PC-9 (cell line): ENCODE measurements at regions of chr19 and their contacts with region 1.

Region 1: DNA sequence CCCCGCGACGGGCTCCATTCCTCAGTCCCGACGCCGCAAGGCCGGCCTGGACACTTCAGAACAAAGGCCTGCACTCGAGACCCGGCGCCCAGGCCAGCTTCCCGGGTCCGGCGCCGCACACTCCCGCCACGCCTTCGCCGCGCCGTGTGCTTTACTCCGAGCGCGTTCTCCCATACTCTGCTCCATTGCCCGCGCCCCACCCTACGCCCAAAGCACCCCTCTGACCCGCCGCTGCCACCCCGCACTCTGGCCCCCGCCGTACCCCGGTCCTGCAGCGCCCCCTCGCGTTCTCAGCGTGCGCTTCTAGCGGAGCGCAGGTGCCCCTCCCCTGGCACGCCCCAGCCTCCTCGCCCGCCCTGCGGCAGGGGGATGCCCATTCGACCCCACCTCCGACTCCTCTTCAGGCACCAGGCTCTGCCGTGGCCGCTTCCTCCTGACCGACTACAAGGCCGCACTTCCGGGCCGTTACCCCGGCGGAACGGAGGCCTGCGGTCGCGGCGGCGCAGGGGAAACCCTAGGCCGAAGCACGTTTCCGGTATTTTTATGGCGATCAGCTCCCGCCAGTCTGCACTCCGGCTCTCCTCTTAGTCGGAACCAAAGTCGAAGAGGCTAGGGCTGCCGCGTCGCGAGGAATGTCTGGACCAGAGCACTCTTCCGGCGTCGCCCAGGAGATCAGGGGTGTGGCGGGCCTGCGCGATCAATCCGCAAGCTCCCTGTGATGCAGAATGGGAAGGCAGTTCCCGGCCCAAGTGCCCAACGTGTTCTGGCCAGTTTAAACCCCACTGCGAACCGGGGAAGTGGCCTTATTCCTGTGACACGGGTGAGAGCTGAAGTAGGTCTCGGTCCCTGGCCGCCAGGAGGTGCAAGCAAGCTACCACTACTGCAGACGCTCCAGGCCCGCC is at the start of gene ZBTB45:
- DNase-seq: peak; percentile 83 to 92
- H3K4me3 ChIP-seq: peak within 1 kb of the TSS; percentile 83
- H3K27ac ChIP-seq: peak within 1 kb of the TSS; percentile 68
- H3K4me1 ChIP-seq: peaks cover 10% of the 10 kb centered on the region
- H3K27me3 ChIP-seq: no peaks in the 10 kb centered on the region
- CTCF ChIP-seq: peak; percentile 67
- total RNA-seq, gene ZBTB45: 8.1 and 8.9 TPM in 2 replicates

Region 2: GRCh38 chr19:57103573-57104277 is 1415.9 kb before region 1 on chr19:
- CTCF ChIA-PET with region 1: interaction called, 4 read pairs
- POLR2A ChIA-PET with region 1: no interaction called
- intact Hi-C with region 1: loop called (anchors 5 kb)
- DNase-seq: peak; percentile 35 to 49
- H3K4me3 ChIP-seq: peak overlapping the region; percentile 3; the same call in 1 of the 2 replicates
- H3K27ac ChIP-seq: no peak overlapping the region
- H3K4me1 ChIP-seq: no peaks in the 10 kb centered on the region
- H3K27me3 ChIP-seq: no peaks in the 10 kb centered on the region
- CTCF ChIP-seq: peak; percentile 91

Region 3: GRCh38 chr19:58204588-58204987 is 315.0 kb before region 1 on chr19:
- CTCF ChIA-PET with region 1: no interaction called
- POLR2A ChIA-PET with region 1: no interaction called
- intact Hi-C with region 1: no loop called
- DNase-seq: no peak
- H3K4me3 ChIP-seq: no peak overlapping the region
- H3K27ac ChIP-seq: no peak overlapping the region
- H3K4me1 ChIP-seq: no peaks in the 10 kb centered on the region
- H3K27me3 ChIP-seq: no peaks in the 10 kb centered on the region
- CTCF ChIP-seq: no peak

Region 4: DNA sequence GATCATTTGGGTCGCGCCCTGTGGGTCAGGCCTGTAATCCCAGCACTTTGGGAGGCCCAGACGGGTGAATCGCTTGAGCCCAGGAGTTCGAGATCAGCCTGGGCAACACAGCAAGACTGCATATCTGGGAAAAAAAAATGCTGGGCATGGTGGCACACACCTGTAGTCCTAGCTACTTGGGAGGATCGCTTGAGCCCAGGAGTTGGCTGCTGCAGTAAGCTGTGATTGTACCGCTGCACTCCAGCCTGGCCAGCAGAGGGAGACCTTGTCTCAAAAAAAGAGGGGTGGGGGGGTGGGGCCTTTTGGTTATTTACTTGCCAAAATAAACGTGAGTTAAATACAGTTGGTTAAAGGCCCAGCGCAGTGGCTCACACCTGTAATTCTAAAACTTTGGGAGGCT is 300.7 kb before region 1 on chr19:
- CTCF ChIA-PET with region 1: interaction called, 6 read pairs
- POLR2A ChIA-PET with region 1: interaction called, 9 read pairs
- intact Hi-C with region 1: loop called (anchors 2 kb)
- DNase-seq: peak in 1 of 2 experiments; percentile 29
- H3K4me3 ChIP-seq: no peak overlapping the region
- H3K27ac ChIP-seq: no peak overlapping the region
- H3K4me1 ChIP-seq: no peaks in the 10 kb centered on the region
- H3K27me3 ChIP-seq: no peaks in the 10 kb centered on the region
- CTCF ChIP-seq: peak; percentile 59

Region 5: GRCh38 chr19:58228585-58229254 is 290.9 kb before region 1 on chr19 and contains the start of gene ZNF544:
- CTCF ChIA-PET with region 1: no interaction called
- POLR2A ChIA-PET with region 1: no interaction called
- intact Hi-C with region 1: loop called (anchors 1 kb)
- DNase-seq: peak; percentile 57 to 71
- H3K4me3 ChIP-seq: peak within 1 kb of the TSS; percentile 75
- H3K27ac ChIP-seq: peak within 1 kb of the TSS; percentile 34; the same call in 1 of the 2 replicates
- H3K4me1 ChIP-seq: no peaks in the 10 kb centered on the region
- H3K27me3 ChIP-seq: no peaks in the 10 kb centered on the region
- CTCF ChIP-seq: no peak
- total RNA-seq, gene ZNF544: 29.5 and 32.7 TPM in 2 replicates

Region 6: GRCh38 chr19:58326914-58327726 is 192.5 kb before region 1 on chr19 and contains the start of gene ZSCAN22:
- CTCF ChIA-PET with region 1: interaction called, 4 read pairs
- POLR2A ChIA-PET with region 1: no interaction called
- intact Hi-C with region 1: loop called (anchors 2 kb)
- DNase-seq: peak; percentile 86 to 90
- H3K4me3 ChIP-seq: peak within 1 kb of the TSS; percentile 80
- H3K27ac ChIP-seq: peak within 1 kb of the TSS; percentile 50
- H3K4me1 ChIP-seq: no peaks in the 10 kb centered on the region; the same call in 1 of the 2 replicates
- H3K27me3 ChIP-seq: no peaks in the 10 kb centered on the region
- CTCF ChIP-seq: no peak
- total RNA-seq, gene ZSCAN22: 0.08 TPM in 1 of 2 replicates, not detected in the other

Region 7: GRCh38 chr19:58400916-58401839 is 118.4 kb before region 1 on chr19:
- CTCF ChIA-PET with region 1: no interaction called
- POLR2A ChIA-PET with region 1: no interaction called
- intact Hi-C with region 1: loop called (anchors 2 kb)
- DNase-seq: peak; percentile 94 to 98
- H3K4me3 ChIP-seq: peak overlapping the region; percentile 72
- H3K27ac ChIP-seq: no peak overlapping the region
- H3K4me1 ChIP-seq: peaks cover 5% of the 10 kb centered on the region
- H3K27me3 ChIP-seq: no peaks in the 10 kb centered on the region
- CTCF ChIP-seq: no peak

Region 8: GRCh38 chr19:58475714-58476497 is 43.7 kb before region 1 on chr19 and contains the start of gene ZNF446:
- CTCF ChIA-PET with region 1: no interaction called
- POLR2A ChIA-PET with region 1: no interaction called
- intact Hi-C with region 1: loop called (anchors 1 kb)
- DNase-seq: peak; percentile 84 to 90
- H3K4me3 ChIP-seq: peak within 1 kb of the TSS; percentile 68
- H3K27ac ChIP-seq: peak within 1 kb of the TSS; percentile 51
- H3K4me1 ChIP-seq: peaks cover 18% of the 10 kb centered on the region; the same call in 1 of the 2 replicates
- H3K27me3 ChIP-seq: no peaks in the 10 kb centered on the region
- CTCF ChIP-seq: no peak
- total RNA-seq, gene ZNF446: 11.0 and 16.5 TPM in 2 replicates